Activated B cell treated with CpG ODN at 0.5 μM for 24 hours (primary cell): ENCODE measurements at regions of chr10 and their contacts with region 1.

Region 1: DNA sequence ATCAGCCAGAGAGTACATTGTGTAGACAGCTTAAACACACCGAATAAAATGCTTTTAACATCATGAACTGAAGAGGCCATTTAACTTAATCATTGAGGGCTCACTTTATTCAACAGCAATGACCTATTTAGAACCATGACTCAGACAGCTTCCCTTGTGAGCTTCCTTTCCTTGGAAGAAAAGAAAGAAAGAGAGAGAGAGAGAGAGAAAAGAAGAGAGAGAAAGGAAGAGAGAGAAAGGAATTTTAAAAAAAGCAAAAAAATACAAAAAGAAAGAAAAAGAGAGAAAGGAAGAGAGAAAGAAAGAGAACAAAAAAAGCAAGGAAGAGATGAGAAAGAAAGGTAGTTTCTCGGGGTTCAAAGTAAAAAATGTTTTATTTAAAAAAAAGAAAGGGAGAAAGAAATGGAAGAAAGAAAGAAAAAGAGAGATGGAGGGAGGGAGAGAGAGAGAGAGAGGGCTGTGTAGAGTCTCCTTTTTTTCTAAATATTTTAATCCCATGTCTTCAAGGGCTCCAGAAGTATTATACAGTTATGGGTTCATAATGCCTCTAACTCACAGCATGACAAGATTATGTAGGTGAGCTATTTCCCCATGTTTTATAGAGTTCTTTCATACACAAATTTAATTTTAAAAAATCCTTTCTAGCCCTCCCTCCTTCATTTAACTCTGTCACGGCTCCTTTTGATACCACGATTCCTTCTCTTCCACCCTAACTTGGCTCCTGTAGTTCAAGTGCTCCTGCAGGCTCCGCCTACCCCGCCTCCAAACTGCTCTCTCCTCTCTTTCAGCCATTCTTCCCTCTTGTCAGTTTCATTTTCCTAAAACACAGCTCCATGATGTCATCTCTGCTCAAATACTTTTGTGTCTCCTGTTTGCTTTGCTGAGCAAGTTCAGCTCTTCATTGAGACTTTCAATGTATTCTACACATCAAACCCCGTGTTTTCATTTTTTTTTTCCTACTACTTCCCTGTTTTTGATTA is 85.5 kb downstream of the PRTFDC1 start:
- DNase-seq: no peak
- ATAC-seq: no peak
- H3K4me3 Mint-ChIP-seq: no peak overlapping the region
- H3K27ac Mint-ChIP-seq: no peak overlapping the region
- H3K4me1 Mint-ChIP-seq: peaks cover 8% of the 10 kb centered on the region
- H3K27me3 Mint-ChIP-seq: peaks cover 3% of the 10 kb centered on the region
- CTCF ChIP-seq: no peak

Region 2: GRCh38 chr10:24806262-24806661 is 60.6 kb before region 1 on chr10:
- CTCF ChIA-PET with region 1: no interaction called
- POLR2A ChIA-PET with region 1: interaction called, 5 read pairs
- intact Hi-C with region 1: loop called (anchors 10 kb)
- DNase-seq: no peak
- ATAC-seq: no peak
- H3K4me3 Mint-ChIP-seq: no peak overlapping the region
- H3K27ac Mint-ChIP-seq: no peak overlapping the region
- H3K4me1 Mint-ChIP-seq: no peaks in the 10 kb centered on the region
- H3K27me3 Mint-ChIP-seq: no peaks in the 10 kb centered on the region
- CTCF ChIP-seq: no peak

Region 3: DNA sequence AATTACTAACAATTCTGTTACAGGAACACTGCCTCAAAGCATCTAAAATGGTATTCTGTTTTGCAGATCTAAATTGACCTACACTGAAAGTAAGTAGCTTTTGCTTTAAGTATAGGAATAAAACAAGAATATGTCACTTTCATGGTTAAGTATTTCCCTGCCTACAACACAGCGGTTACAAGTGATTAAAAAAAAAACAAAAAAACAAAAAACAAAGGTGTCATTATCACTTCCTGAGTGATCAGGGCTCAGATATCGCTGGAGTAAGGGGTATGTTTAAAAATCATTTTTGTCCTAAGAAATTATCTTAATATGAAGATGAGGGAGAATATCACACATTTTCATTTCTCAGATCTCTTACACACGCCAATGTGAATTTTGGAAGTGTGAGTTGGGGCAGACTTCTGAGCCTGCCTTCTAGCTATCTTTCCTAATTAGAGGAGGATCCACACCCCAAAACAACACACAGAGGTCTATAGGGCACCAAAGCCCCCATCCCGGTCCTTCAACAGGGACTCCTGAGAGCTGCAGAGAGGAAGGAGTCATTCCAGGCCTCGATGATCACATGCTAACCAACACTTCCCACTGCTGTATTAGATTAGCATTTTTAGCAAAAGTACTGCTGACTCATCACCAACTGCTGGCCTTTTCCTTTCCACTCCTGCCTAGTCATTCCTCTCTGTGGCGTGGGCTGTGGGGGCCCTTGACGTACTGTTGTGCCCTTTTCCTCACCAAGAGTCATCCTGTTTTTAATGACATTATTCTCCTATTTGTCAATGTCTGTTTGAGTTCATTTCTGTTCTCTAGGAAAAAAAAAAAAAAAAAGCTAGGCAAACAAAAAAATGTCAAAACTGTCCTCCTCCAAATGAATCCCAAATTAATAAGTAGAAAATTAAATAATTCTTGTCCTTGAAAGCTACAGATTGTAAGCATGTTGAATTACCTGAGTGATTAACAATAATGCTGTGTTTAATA is 54.3 kb after region 1 on chr10:
- CTCF ChIA-PET with region 1: no interaction called
- POLR2A ChIA-PET with region 1: no interaction called
- intact Hi-C with region 1: no loop called
- DNase-seq: no peak
- ATAC-seq: no peak
- H3K4me3 Mint-ChIP-seq: no peak overlapping the region
- H3K27ac Mint-ChIP-seq: no peak overlapping the region
- H3K4me1 Mint-ChIP-seq: no peaks in the 10 kb centered on the region
- H3K27me3 Mint-ChIP-seq: no peaks in the 10 kb centered on the region
- CTCF ChIP-seq: no peak